ENCODE measurements at regions of chr11 and their contacts with region 1.

Region 1: DNA sequence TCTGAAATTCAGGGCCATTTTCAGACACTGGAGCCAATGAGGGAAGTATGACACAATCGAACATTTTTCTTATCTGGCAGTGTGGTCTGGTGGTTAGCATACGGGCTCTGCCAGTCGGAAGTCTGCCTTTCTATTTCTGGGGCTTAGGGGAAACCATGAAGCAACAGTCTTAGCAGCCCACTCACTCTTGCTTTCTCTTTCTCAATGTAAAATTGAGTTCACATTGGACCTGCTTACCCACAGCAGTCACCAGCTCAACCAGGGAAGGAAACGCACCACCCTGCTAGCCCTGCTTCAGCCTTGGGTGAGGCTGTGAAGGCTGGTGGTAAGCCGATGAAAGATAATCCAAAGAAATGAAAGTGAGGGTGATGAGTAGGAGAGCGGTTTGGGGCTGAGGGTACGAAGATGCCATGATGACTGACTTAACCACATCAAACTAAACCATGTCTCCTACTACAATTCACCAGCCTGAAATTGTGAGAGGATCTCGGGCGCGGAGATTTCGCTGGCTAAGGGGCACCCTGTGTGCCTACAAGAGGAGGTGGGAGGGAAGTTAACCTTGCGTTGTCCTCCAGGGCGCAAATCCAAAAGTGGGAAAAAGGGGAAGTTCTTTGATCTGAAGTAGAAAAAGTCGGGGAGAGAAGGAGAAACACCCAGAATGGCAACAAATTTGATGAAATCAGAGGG is 2.0 kb upstream of the LMO2 start:
- DNase-seq: peak; percentile 92
- ATAC-seq: peak; percentile 95
- H3K4me3 Mint-ChIP-seq: peak overlapping the region; percentile 1
- H3K27ac Mint-ChIP-seq: peak overlapping the region; percentile 10
- H3K4me1 Mint-ChIP-seq: peaks cover 36% of the 10 kb centered on the region
- H3K27me3 Mint-ChIP-seq: peaks cover 69% of the 10 kb centered on the region

Region 2: DNA sequence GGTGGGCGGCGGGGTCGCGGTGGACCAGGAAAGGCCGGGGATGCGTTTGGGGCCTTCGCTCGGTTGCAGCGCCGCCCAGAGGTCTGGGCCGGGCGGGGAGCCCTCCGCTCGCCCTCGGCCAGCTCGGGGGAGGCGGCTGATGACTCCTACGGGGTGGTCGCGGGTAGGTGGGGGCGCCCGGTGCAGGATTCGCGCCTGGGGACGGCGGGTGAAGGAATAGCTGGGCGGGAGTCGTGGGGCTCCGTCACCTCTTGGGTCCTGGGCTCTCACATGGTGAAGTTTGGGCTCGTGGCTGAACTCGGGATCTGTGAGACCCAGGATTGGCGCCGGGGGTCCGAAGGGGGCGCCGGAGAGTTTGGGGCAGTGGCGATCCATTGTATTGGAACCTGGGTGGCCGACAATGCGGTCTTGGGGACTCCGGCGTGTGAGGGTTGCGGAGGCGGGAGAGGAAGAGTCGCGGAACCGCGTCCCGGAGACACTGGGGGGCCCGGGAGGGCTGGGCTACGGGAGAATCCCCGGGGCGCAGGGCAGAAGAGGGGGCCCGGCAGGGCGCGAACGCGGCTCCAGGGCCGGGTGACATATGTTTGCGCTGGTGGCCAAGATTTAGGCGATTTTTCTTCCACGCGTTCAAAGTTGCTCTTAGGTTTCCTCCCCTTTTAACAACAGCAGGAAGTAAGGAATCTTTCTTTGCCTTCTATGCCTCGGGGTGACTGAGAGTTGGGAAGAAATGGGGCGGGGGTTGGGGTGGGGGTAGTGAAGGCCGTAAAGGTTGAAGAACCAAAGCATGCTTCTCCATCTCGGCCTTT is 1000.3 kb before region 1 on chr11:
- CTCF ChIA-PET with region 1: no interaction called
- POLR2A ChIA-PET with region 1: no interaction called
- intact Hi-C with region 1: loop called in 1 of 2 experiments (anchors 5 kb)
- DNase-seq: peak; percentile 77
- ATAC-seq: peak; percentile 45
- H3K4me3 Mint-ChIP-seq: peak overlapping the region; percentile 97
- H3K27ac Mint-ChIP-seq: peak overlapping the region; percentile 98
- H3K4me1 Mint-ChIP-seq: peaks cover 38% of the 10 kb centered on the region
- H3K27me3 Mint-ChIP-seq: no peaks in the 10 kb centered on the region

Region 3: DNA sequence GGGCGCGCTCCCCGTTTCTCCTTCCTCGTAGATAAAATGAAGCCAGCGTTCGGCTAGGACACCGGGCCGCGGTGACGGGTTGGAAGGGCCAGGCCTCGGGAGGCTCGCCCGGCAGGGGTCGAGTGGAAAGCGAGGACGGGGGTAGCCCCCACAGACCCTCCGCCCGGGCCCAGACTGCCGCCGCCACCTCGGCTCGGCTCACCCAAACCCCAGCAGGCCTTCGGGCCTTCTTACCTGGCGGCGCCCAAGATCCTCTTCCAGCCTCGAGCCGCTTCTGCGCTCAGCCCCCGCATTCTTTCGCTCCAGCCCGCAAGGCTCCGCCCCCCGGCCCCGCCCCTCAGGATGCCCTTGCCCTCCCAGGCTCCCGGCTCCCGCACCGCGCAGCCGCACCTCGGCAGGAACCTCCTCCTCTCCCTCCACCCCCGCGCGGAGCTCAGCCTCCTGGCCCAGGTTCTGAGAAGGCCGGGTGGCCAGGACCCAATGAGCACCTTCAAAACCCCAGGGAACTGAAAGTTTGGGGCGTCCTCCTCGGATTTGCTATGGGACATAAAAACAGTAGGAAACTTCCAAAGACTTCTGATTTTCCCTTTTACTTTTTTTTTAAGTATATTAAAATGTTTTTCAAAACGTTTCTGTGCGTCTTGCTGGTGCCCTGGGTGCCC is 157.6 kb before region 1 on chr11 and contains the start of gene CD59:
- CTCF ChIA-PET with region 1: interaction called, 3 read pairs
- POLR2A ChIA-PET with region 1: no interaction called
- intact Hi-C with region 1: loop called (anchors 1 to 5 kb)
- DNase-seq: peak; percentile 95
- ATAC-seq: peak; percentile 74
- H3K4me3 Mint-ChIP-seq: peak within 1 kb of the TSS; percentile 82
- H3K27ac Mint-ChIP-seq: peak within 1 kb of the TSS; percentile 84
- H3K4me1 Mint-ChIP-seq: peaks cover 44% of the 10 kb centered on the region
- H3K27me3 Mint-ChIP-seq: peaks cover 16% of the 10 kb centered on the region
- total RNA-seq, gene CD59: 58.2 to 60.0 TPM

Region 4: GRCh38 chr11:34234086-34234740 is 340.4 kb after region 1 on chr11:
- CTCF ChIA-PET with region 1: no interaction called
- POLR2A ChIA-PET with region 1: no interaction called
- intact Hi-C with region 1: loop called in 1 of 2 experiments (anchors 1 kb)
- DNase-seq: peak; percentile 89
- ATAC-seq: peak; percentile 93
- H3K4me3 Mint-ChIP-seq: peak overlapping the region; percentile 16
- H3K27ac Mint-ChIP-seq: peak overlapping the region; percentile 72
- H3K4me1 Mint-ChIP-seq: peaks cover 44% of the 10 kb centered on the region
- H3K27me3 Mint-ChIP-seq: peaks cover 3% of the 10 kb centered on the region

Region 5: DNA sequence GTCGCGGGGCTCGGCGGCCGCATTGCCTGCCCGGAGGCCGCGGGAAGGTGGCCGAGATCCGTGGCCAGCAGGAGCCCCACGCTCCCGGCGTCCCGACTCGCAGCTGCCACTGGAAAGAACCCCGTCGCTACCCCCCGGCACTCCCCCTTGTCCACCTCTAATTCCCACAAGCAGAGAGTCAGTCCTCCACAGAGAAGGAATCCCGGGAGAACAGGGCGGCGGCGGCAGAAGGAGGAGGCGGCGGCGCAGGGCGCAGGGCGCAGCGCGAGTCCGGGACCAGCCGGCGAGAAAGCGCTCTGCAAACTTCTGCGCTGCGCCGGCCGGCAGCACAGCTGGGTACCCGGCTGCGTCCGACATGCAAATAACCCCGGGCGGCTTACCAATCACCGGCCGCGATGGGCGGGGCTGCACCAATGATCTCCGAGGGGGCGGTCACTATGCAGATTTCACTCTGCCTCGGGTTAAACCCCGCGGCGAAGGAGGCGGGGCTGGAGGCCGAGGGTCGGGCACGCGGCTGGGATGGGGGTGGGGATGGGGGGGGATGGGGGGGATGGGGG is 463.9 kb after region 1 on chr11 and contains the start of gene ABTB2:
- CTCF ChIA-PET with region 1: no interaction called
- POLR2A ChIA-PET with region 1: interaction called, 3 read pairs
- intact Hi-C with region 1: loop called in 1 of 2 experiments (anchors 10 kb)
- DNase-seq: peak; percentile 99
- ATAC-seq: peak; percentile 95
- H3K4me3 Mint-ChIP-seq: peak within 1 kb of the TSS; percentile 78
- H3K27ac Mint-ChIP-seq: peak within 1 kb of the TSS; percentile 67
- H3K4me1 Mint-ChIP-seq: peaks cover 28% of the 10 kb centered on the region
- H3K27me3 Mint-ChIP-seq: peaks cover 36% of the 10 kb centered on the region
- total RNA-seq, gene ABTB2: 1.2 TPM

Region 6: DNA sequence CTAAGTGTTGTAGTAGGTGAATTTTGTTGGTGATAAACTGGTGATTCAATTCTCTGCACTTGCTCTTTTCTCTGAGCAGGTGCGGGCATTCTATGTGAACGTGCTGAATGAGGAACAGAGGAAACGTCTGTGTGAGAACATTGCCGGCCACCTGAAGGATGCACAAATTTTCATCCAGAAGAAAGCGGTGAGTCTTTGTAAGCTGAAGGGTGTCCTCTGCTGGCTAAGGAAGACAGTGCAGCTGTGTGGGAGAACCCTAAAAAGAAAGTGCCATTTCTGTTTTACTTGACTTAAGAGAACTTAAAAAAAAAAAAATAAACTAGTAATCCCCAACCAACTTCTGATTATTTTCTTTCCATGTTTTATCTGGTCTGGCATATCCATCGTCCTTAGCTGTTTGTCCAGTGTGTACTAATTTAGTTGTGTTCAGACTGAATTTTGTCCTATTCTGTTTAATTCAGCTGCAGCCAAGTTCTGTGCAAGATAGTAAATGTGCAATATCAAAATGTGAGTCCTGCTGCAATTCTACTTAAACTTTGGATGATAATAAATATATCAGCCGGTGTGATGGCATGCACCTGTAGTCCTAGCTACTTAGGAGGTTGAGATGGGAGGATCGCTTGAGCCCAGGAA is 574.5 kb after region 1 on chr11:
- CTCF ChIA-PET with region 1: no interaction called
- POLR2A ChIA-PET with region 1: no interaction called
- intact Hi-C with region 1: no loop called
- DNase-seq: peak; percentile 68
- ATAC-seq: peak; percentile 66
- H3K4me3 Mint-ChIP-seq: no peak overlapping the region
- H3K27ac Mint-ChIP-seq: no peak overlapping the region
- H3K4me1 Mint-ChIP-seq: peaks cover 4% of the 10 kb centered on the region
- H3K27me3 Mint-ChIP-seq: no peaks in the 10 kb centered on the region

Region 7: DNA sequence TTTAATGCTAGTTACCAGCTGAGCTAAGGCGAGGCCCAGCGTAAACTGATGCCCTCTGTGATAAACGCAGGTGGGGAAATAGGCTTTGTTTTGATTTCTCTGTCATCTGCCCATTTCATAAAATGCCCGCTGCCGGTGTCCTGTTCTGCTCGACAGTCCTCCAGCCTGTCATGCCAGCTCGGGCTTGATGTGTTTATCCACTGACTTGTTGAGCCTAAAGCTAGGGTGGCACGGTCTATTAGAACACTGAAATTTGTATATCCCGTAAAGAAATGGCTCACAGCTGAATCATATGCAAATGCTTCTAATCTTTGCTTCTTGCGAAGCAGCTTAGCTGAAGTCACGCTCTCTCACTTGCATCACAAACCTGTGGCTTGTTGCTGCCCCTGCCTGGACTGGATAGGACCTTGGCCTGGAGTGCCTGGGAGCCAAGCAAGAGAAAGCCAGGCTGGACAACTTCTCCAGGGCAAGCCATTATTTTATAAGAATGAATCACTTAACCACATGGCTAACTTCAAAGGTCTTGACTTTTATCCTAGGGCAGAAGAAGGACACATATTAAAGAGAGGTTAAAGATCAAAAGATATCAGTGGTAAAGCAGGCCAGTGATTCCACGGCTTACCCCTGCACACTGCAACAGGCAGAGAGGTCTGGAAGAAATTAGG is 760.1 kb after region 1 on chr11:
- CTCF ChIA-PET with region 1: no interaction called
- POLR2A ChIA-PET with region 1: no interaction called
- intact Hi-C with region 1: loop called in 1 of 2 experiments (anchors 1 kb)
- DNase-seq: peak; percentile 46
- ATAC-seq: peak; percentile 39
- H3K4me3 Mint-ChIP-seq: no peak overlapping the region
- H3K27ac Mint-ChIP-seq: peak overlapping the region; percentile 13
- H3K4me1 Mint-ChIP-seq: peaks cover 55% of the 10 kb centered on the region
- H3K27me3 Mint-ChIP-seq: peaks cover 34% of the 10 kb centered on the region

Region 8: GRCh38 chr11:35214792-35215193 is 1320.9 kb after region 1 on chr11:
- CTCF ChIA-PET with region 1: no interaction called
- POLR2A ChIA-PET with region 1: interaction called, 12 read pairs
- intact Hi-C with region 1: no loop called
- DNase-seq: peak; percentile 69
- ATAC-seq: peak; percentile 88
- H3K4me3 Mint-ChIP-seq: peak overlapping the region; percentile 5
- H3K27ac Mint-ChIP-seq: peak overlapping the region; percentile 86
- H3K4me1 Mint-ChIP-seq: peaks cover 72% of the 10 kb centered on the region
- H3K27me3 Mint-ChIP-seq: no peaks in the 10 kb centered on the region

Measured in activated CD4-positive, alpha-beta T cell treated with anti-CD3 and anti-CD28 coated beads for 36 hours (primary cell).